BJ (cell line): ENCODE measurements at regions of chr12 and their contacts with region 1.

Region 1: GRCh38 chr12:92987362-92987761 is 58.3 kb upstream of the EEA1 start:
- DNase-seq: peak; percentile 21
- H3K4me3 ChIP-seq: no peak overlapping the region
- H3K27me3 ChIP-seq: no peaks in the 10 kb centered on the region
- CTCF ChIP-seq: peak; percentile 53

Region 2: DNA sequence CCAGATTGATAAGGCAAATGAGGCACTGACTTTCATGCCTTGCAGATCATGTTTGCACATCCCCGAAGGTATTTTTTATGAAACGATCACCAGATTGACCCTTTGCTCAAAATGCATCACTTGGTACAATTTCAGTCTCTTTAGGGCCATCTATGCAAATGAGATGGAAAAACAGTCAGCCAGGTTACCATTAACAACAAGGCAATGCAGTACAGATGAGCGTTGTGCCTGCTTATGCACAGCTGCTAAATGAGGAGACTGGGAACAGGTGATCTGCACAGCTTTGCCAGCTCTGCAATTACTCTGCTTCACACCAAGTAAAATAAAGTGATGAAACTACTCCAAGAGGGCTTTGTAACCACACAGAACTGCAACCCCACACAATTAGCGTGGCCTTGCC is 310.7 kb before region 1 on chr12:
- CTCF ChIA-PET with region 1: no interaction called
- POLR2A ChIA-PET with region 1: no interaction called
- DNase-seq: no peak
- H3K4me3 ChIP-seq: no peak overlapping the region
- H3K27me3 ChIP-seq: no peaks in the 10 kb centered on the region
- CTCF ChIP-seq: no peak

Region 3: GRCh38 chr12:92784795-92785562 is 202.4 kb before region 1 on chr12:
- CTCF ChIA-PET with region 1: interaction called, 16 read pairs
- POLR2A ChIA-PET with region 1: no interaction called
- DNase-seq: no peak
- H3K4me3 ChIP-seq: no peak overlapping the region
- H3K27me3 ChIP-seq: no peaks in the 10 kb centered on the region
- CTCF ChIP-seq: peak; percentile 49

Region 4: DNA sequence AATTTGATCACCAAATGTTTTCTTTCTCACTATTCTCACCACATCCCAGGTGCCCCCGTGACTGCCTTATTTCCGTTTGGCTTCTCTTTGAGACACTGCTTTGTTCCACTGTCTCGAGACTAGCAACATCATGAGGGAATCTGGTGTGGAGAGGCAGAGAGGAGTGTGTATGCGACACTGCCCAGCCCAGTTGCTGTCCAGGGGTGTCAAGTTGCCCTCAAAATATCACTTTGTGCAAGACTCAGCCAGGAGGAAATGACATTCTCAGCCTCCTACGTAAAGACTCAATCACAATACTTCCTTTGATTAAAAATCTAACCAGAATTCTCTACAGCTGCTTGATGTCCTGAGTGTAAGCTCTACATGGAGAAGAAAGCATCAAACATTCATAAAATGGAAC is 10.0 kb before region 1 on chr12:
- CTCF ChIA-PET with region 1: interaction called, 27 read pairs
- POLR2A ChIA-PET with region 1: no interaction called
- DNase-seq: no peak
- H3K4me3 ChIP-seq: no peak overlapping the region
- H3K27me3 ChIP-seq: no peaks in the 10 kb centered on the region
- CTCF ChIP-seq: no peak

Region 5: GRCh38 chr12:93397412-93397811 is 410.1 kb after region 1 on chr12:
- CTCF ChIA-PET with region 1: interaction called, 32 read pairs
- POLR2A ChIA-PET with region 1: no interaction called
- DNase-seq: no peak
- H3K4me3 ChIP-seq: no peak overlapping the region
- H3K27me3 ChIP-seq: no peaks in the 10 kb centered on the region
- CTCF ChIP-seq: no peak

Region 6: GRCh38 chr12:93419388-93420034 is 432.1 kb after region 1 on chr12:
- CTCF ChIA-PET with region 1: interaction called, 52 read pairs
- POLR2A ChIA-PET with region 1: no interaction called
- DNase-seq: peak; percentile 26
- H3K4me3 ChIP-seq: no peak overlapping the region
- H3K27me3 ChIP-seq: no peaks in the 10 kb centered on the region
- CTCF ChIP-seq: peak; percentile 53